CD4-positive, alpha-beta T cell (primary cell): ENCODE measurements at regions of chr15 and their contacts with region 1.

Region 1: DNA sequence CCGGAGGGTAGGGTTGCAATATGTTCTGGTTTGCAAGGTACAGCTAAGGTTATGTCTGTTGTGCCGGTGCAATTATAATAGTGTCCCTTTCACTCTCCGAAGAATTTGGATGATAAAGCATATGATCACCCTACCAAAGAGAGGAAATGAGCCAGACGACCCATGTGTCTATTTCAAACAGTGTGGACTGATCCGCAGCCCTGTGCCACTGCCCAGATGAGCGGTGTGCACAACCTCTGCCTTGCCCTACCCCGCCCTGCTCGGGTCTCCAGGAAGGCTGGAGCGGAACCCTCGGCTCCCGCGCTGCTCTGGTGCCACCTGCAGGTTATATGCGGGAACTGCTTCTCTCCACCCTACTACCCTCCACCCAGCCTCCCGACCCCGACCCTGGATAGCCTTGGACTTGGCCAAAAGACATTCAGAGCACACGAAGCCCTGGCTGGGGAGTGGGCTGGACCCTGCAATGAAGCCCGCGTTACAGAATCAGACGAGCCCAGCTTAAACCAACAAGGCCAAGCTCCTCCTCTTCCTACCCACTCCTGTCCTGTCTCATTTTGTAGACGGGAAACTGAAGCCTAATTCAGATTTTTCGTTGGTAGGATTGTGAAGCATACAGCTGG is 68.4 kb upstream of the CHRNB4 start:
- DNase-seq: peak; percentile 44 to 76 (median 53)
- ATAC-seq: peak; percentile 87
- H3K4me3 ChIP-seq: no peak overlapping the region
- H3K4me3 Mint-ChIP-seq: no peak overlapping the region
- H3K27ac ChIP-seq: no peak overlapping the region
- H3K27ac Mint-ChIP-seq: no peak overlapping the region
- H3K4me1 ChIP-seq: peaks cover 5% of the 10 kb centered on the region
- H3K4me1 Mint-ChIP-seq: peaks cover 4% of the 10 kb centered on the region
- H3K27me3 ChIP-seq: peaks cover 5 to 25% of the 10 kb centered on the region in 2 experiments
- H3K27me3 Mint-ChIP-seq: peaks cover 46% of the 10 kb centered on the region
- CTCF ChIP-seq: peak; percentile 76

Region 2: DNA sequence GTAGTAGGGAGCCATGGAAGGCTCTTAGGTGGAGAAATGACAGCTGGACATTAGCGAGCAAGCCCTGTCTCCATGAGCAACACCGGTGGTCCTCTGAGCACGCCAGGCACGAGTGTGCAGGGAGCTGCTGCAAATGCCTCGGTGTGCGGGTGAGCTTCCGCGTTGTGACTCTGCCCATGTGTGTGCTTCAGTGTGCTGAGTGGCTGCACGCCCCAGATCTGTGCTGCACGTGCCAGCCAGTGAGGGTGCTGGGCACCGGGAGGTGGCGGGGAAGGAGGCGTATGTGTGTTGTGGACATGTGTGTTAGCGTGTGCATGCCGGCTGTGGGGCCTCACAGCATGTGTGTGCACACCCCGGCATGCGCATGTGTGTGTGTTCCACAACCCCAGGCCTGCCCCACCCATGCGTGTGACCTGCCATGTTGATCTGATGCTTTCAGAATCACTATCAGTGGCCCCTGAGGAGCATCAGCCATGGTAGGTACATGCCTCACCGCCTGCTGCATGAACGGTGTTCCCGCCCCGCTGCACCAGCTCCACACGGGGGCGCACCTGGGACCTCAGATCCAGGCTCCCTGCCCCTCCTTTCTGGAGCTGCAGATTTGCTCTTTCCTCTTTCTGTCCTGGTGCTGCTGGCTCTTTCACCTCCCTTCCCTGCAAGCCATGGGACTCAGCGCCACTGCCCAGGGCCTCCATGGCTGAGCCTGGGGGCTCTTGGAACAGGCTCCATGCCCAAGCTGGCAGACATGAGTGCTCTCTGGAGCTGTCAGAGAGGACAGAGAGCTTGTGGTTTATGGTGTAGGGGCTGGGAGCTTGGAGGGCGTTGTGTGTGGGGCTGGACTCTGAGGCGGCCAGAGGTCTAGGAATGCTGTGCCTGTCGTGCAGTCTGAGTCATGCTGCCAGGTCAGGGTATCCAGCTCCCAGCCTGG is 801.3 kb before region 1 on chr15:
- CTCF ChIA-PET with region 1: no interaction called
- POLR2A ChIA-PET with region 1: no interaction called
- intact Hi-C with region 1: loop called in 1 of 2 experiments (anchors 5 kb)
- DNase-seq: peak in 12 of 14 experiments; percentile 10 to 70 (median 34)
- ATAC-seq: peak; percentile 57
- H3K4me3 ChIP-seq: no peak overlapping the region
- H3K4me3 Mint-ChIP-seq: no peak overlapping the region
- H3K27ac ChIP-seq: no peak overlapping the region
- H3K27ac Mint-ChIP-seq: no peak overlapping the region
- H3K4me1 ChIP-seq: peaks cover 3% of the 10 kb centered on the region
- H3K4me1 Mint-ChIP-seq: no peaks in the 10 kb centered on the region
- H3K27me3 ChIP-seq: no peaks in the 10 kb centered on the region
- H3K27me3 Mint-ChIP-seq: peaks cover 7% of the 10 kb centered on the region
- CTCF ChIP-seq: peak; percentile 29

Region 3: DNA sequence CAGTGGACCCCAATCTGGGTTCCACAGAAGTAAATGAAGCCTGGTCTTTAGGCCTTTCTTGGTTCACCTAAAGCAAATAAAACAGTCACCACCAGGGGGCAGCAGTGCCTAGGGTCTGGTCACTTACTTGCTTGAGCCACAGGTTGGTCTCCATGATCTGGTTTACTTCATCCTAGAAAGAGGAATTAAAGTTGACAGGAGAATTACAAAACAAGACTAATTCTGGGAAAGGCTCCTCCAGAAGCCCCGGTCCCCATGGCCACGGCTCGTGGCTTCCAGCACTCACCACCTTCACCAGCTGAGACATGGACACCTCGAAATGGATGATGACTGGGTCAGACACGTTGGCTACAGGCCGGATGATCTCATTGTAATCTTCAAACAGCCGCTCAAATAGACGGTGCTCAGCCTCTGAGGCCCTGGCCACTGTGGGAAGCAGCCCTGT is 90.9 kb before region 1 on chr15:
- CTCF ChIA-PET with region 1: interaction called, 3 read pairs
- POLR2A ChIA-PET with region 1: no interaction called
- intact Hi-C with region 1: loop called (anchors 1 kb)
- DNase-seq: peak; percentile 55 to 86 (median 74)
- ATAC-seq: peak; percentile 32
- H3K4me3 ChIP-seq: no peak overlapping the region
- H3K4me3 Mint-ChIP-seq: no peak overlapping the region
- H3K27ac ChIP-seq: no peak overlapping the region
- H3K27ac Mint-ChIP-seq: no peak overlapping the region
- H3K4me1 ChIP-seq: peaks cover 11% of the 10 kb centered on the region
- H3K4me1 Mint-ChIP-seq: peaks cover 18% of the 10 kb centered on the region
- H3K27me3 ChIP-seq: peaks cover 24 to 37% of the 10 kb centered on the region in 2 experiments
- H3K27me3 Mint-ChIP-seq: peaks cover 45% of the 10 kb centered on the region
- CTCF ChIP-seq: peak; percentile 74

Region 4: DNA sequence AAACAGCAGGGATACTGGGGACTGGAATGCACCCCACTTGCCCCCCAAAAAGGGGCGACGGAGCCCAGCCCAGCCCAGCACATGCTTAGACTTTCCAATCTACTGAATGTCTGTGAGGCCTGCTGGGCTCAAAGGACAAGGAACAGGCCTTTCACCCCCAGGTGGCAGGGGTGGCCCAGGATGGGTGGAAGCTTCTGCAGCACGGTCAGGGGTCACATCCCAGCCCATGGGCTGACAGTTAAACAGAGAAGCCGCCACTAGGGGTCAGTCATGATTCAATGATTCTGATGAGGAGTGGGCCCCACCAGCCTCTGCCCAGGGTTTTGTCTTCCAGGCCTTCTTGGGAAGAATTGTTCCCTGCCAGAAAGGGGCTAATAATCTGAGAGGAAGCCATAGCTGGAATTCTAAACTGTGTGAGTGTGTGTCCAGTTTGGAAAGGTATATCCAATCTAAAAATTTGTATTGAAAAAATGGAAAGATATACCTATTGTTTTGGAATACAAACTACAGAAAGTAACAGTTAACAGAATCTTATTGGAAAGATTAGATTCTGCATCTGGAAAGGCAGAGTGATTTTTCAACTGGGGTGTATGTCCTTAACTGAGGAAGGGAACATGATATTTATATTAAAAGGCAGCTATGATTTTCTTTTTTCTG is 70.6 kb before region 1 on chr15:
- CTCF ChIA-PET with region 1: no interaction called
- POLR2A ChIA-PET with region 1: no interaction called
- intact Hi-C with region 1: loop called (anchors 2 to 5 kb)
- DNase-seq: peak in 12 of 14 experiments; percentile 10 to 63 (median 20)
- ATAC-seq: peak; percentile 54
- H3K4me3 ChIP-seq: no peak overlapping the region
- H3K4me3 Mint-ChIP-seq: peak overlapping the region; percentile 35
- H3K27ac ChIP-seq: no peak overlapping the region
- H3K27ac Mint-ChIP-seq: no peak overlapping the region
- H3K4me1 ChIP-seq: peaks cover 19% of the 10 kb centered on the region
- H3K4me1 Mint-ChIP-seq: peaks cover 13% of the 10 kb centered on the region
- H3K27me3 ChIP-seq: peaks cover 5 to 25% of the 10 kb centered on the region in 2 experiments
- H3K27me3 Mint-ChIP-seq: peaks cover 22% of the 10 kb centered on the region
- CTCF ChIP-seq: peak; percentile 61

Region 5: DNA sequence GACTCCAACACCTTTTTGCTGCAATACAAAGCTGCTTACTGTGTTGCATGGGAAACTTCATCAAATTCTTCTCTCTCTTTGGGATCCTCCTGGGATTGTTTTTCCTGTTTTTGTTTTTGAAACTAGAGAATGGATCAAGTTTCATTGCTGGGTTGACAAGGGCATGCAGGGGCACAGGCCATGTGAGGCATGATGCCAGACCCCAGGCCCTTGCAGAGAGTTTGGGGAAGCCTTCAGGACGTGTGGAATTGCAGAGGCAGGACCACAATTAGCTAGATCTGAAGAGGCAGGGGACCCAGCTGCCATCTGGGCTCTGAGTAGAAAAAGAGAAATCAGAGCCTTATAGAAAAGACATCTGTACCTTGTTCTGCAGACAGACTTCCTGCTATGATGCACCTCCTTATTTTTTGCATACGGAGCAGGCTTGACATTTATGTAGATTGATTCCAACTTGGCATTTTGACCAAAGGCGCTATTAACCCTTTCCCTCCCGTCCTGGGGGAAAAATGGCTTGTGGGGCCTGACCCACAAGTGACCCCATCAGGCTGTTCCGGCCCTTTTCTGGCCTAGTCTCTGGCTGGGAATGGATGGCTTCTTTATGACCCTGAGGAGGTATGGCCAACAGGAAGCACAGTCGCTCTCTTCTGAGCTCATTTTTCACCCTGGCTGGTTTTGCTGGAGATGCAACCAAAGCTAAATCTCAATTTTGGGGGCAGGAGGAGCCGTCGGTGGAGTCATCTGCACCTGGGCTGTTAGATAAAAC is 24.0 kb before region 1 on chr15:
- CTCF ChIA-PET with region 1: no interaction called
- POLR2A ChIA-PET with region 1: no interaction called
- intact Hi-C with region 1: no loop called
- DNase-seq: no peak
- ATAC-seq: no peak
- H3K4me3 ChIP-seq: no peak overlapping the region
- H3K4me3 Mint-ChIP-seq: no peak overlapping the region
- H3K27ac ChIP-seq: no peak overlapping the region
- H3K27ac Mint-ChIP-seq: no peak overlapping the region
- H3K4me1 ChIP-seq: no peaks in the 10 kb centered on the region
- H3K4me1 Mint-ChIP-seq: peaks cover 11% of the 10 kb centered on the region
- H3K27me3 ChIP-seq: no peaks in the 10 kb centered on the region
- H3K27me3 Mint-ChIP-seq: no peaks in the 10 kb centered on the region
- CTCF ChIP-seq: no peak

Region 6: GRCh38 chr15:79028411-79028964 is 319.1 kb after region 1 on chr15:
- CTCF ChIA-PET with region 1: no interaction called
- POLR2A ChIA-PET with region 1: no interaction called
- intact Hi-C with region 1: no loop called
- DNase-seq: peak in 2 of 14 experiments; percentile 6 to 17
- ATAC-seq: no peak
- H3K4me3 ChIP-seq: no peak overlapping the region
- H3K4me3 Mint-ChIP-seq: no peak overlapping the region
- H3K27ac ChIP-seq: no peak overlapping the region
- H3K27ac Mint-ChIP-seq: no peak overlapping the region
- H3K4me1 ChIP-seq: no peaks in the 10 kb centered on the region
- H3K4me1 Mint-ChIP-seq: no peaks in the 10 kb centered on the region
- H3K27me3 ChIP-seq: peaks cover 0 to 6% of the 10 kb centered on the region in 2 experiments
- H3K27me3 Mint-ChIP-seq: peaks cover 8% of the 10 kb centered on the region
- CTCF ChIP-seq: no peak